Esophagus squamous epithelium (tissue), 5 donors: ENCODE measurements at regions of chr17 and their contacts with region 1.

Region 1: GRCh38 chr17:9239793-9240658 is 218.7 kb downstream of the NTN1 start:
- DNase-seq: no peak
- H3K4me3 ChIP-seq: peak overlapping the region; percentile 40 to 64 (median 51)
- H3K27ac ChIP-seq: peak overlapping the region; percentile 82 to 98 (median 94)
- H3K4me1 ChIP-seq: peaks cover 25 to 75% (median 52%) of the 10 kb centered on the region in 3 donors
- H3K27me3 ChIP-seq: no peaks in the 10 kb centered on the region
- CTCF ChIP-seq: peak in 1 of 6 experiments; percentile 3
- POLR2A ChIP-seq: peak in 2 of 4 donors; percentile 43 to 67

Region 2: GRCh38 chr17:9021158-9021991 is 218.7 kb before region 1 on chr17 and contains the start of gene NTN1:
- intact Hi-C with region 1: loop called (anchors 10 kb)
- DNase-seq: no peak
- H3K4me3 ChIP-seq: peak within 1 kb of the TSS; percentile 70 to 89 (median 80)
- H3K27ac ChIP-seq: peak within 1 kb of the TSS; percentile 75 to 94 (median 91)
- H3K4me1 ChIP-seq: peaks cover 15 to 59% (median 22%) of the 10 kb centered on the region in 3 donors
- H3K27me3 ChIP-seq: peaks cover 0 to 48% (median 0%) of the 10 kb centered on the region in 4 donors
- CTCF ChIP-seq: no peak
- POLR2A ChIP-seq: peak in 2 of 4 donors; percentile 43 to 60
- total RNA-seq, gene NTN1: 9.8 to 33.6 (median 17.6) TPM

Region 3: GRCh38 chr17:9206741-9207332 is 33.2 kb before region 1 on chr17:
- intact Hi-C with region 1: no loop called
- DNase-seq: no peak
- H3K4me3 ChIP-seq: no peak overlapping the region
- H3K27ac ChIP-seq: peak overlapping the region; percentile 5 to 64 (median 42)
- H3K4me1 ChIP-seq: peaks cover 7 to 28% (median 14%) of the 10 kb centered on the region in 3 donors
- H3K27me3 ChIP-seq: no peaks in the 10 kb centered on the region
- CTCF ChIP-seq: no peak
- POLR2A ChIP-seq: no peak

Region 4: DNA sequence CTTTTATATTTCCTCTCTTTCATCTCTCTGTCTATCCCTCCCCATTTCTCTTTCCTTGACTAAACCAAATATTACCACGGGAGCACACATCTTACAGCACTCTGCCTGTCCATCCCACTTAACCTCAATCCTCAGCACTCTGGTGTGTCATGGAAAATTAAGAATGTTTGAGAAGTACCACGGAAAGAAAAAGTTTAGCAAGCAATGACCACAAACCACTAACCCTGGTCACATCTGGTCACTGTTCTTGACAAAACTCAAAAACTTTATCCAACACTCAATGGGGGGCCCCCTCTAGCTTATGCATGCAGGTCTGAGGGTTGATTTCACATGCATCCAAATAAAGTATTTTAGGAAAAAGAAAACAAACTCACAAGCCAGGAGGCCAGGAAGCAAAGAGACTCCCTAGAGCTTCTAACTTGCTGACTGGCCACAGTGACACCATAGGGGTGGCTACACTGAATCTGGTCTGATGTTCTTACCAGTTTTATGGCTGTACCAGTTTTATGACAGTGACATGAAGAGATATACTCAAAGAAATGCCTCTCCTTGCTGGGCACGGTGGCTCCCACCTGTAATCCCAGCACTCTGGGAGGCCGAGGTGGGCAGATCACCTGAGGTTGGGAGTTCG is 106.4 kb after region 1 on chr17:
- intact Hi-C with region 1: no loop called
- DNase-seq: no peak
- H3K4me3 ChIP-seq: no peak overlapping the region
- H3K27ac ChIP-seq: no peak overlapping the region
- H3K4me1 ChIP-seq: no peaks in the 10 kb centered on the region
- H3K27me3 ChIP-seq: no peaks in the 10 kb centered on the region
- CTCF ChIP-seq: no peak
- POLR2A ChIP-seq: no peak

Region 5: DNA sequence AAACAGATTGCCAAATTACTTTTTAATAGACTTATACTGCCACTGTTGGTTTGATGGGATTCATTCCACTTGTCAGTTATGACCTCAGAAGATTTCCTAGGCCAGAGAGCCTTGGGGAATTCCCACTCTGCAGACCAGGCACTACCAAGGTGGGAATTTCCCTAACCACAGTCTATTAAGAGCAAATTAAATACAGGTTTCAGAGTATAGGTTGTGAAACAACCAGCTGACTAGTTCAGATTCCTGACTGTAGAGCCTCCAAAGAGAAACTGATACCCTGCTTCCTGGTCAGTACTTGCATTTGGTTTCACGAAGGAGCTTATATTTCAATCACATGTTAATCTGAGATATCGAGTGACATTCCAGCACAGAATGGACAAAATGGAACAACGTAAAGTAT is 149.1 kb after region 1 on chr17:
- intact Hi-C with region 1: no loop called
- DNase-seq: no peak
- H3K4me3 ChIP-seq: no peak overlapping the region
- H3K27ac ChIP-seq: no peak overlapping the region
- H3K4me1 ChIP-seq: no peaks in the 10 kb centered on the region
- H3K27me3 ChIP-seq: no peaks in the 10 kb centered on the region
- CTCF ChIP-seq: no peak
- POLR2A ChIP-seq: no peak

Region 6: GRCh38 chr17:9414471-9414870 is 174.4 kb after region 1 on chr17:
- intact Hi-C with region 1: no loop called
- DNase-seq: no peak
- H3K4me3 ChIP-seq: no peak overlapping the region
- H3K27ac ChIP-seq: no peak overlapping the region
- H3K4me1 ChIP-seq: peaks cover 0 to 10% (median 6%) of the 10 kb centered on the region in 3 donors
- H3K27me3 ChIP-seq: no peaks in the 10 kb centered on the region
- CTCF ChIP-seq: no peak
- POLR2A ChIP-seq: no peak